Left ventricle myocardium superior (tissue), 1 donor: ENCODE measurements at regions of chr16 and their contacts with region 1.

Region 1: GRCh38 chr16:56964243-56965148 is 2.7 kb downstream of the CETP start:
- DNase-seq: peak; percentile 94
- ATAC-seq: peak; percentile 64

Region 2: GRCh38 chr16:57045694-57046381 is 81.3 kb after region 1 on chr16:
- intact Hi-C with region 1: loop called (anchors 10 kb)
- DNase-seq: peak; percentile 81
- ATAC-seq: peak; percentile 87